Ovary (tissue), 10 donors: ENCODE measurements at regions of chr2 and their contacts with region 1.

Region 1: GRCh38 chr2:74690571-74690970 is 36.5 kb downstream of the SEMA4F start:
- DNase-seq: no peak
- H3K4me3 ChIP-seq: no peak overlapping the region
- H3K27ac ChIP-seq: no peak overlapping the region
- H3K4me1 ChIP-seq: no peaks in the 10 kb centered on the region
- H3K27me3 ChIP-seq: no peaks in the 10 kb centered on the region
- CTCF ChIP-seq: peak; percentile 18 to 33 (median 28)
- EP300 ChIP-seq: no peak
- POLR2A ChIP-seq: no peak

Region 2: DNA sequence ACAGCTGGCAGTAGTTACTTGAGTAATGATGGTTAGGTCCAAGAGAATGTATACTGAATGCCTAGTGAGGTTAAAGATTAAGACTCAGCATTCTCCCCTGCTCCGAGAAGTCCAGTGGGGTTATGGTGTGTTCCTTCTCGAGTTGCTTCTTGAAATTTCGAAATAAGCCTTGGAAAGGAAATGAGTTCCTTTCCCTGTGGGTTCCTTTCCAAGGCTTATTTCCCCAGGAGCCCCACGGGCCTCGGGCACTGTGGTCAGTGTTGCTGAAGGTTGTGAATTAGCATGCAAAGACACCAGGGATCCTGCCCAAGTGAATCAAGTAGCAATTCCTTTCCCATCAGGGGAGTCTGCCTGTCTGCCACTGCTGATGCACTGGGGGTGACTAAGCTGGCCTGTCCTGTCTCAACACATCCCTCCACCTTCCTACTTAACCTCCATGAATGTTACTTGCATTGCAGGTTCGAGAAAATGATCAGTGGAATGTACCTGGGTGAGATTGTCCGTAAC is 196.9 kb after region 1 on chr2:
- intact Hi-C with region 1: loop called in 1 of 4 experiments (anchors 10 kb)
- DNase-seq: no peak
- H3K4me3 ChIP-seq: no peak overlapping the region
- H3K27ac ChIP-seq: no peak overlapping the region
- H3K4me1 ChIP-seq: no peaks in the 10 kb centered on the region
- H3K27me3 ChIP-seq: no peaks in the 10 kb centered on the region
- CTCF ChIP-seq: no peak
- EP300 ChIP-seq: no peak
- POLR2A ChIP-seq: no peak

Region 3: GRCh38 chr2:75098856-75099255 is 408.3 kb after region 1 on chr2:
- intact Hi-C with region 1: no loop called
- DNase-seq: no peak
- H3K4me3 ChIP-seq: no peak overlapping the region
- H3K27ac ChIP-seq: no peak overlapping the region
- H3K4me1 ChIP-seq: no peaks in the 10 kb centered on the region
- H3K27me3 ChIP-seq: no peaks in the 10 kb centered on the region
- CTCF ChIP-seq: no peak
- EP300 ChIP-seq: no peak
- POLR2A ChIP-seq: no peak